Activated CD4-positive, alpha-beta T cell treated with anti-CD3 and anti-CD28 coated beads, Interleukin-2, amount 10 ng/mL, durations not matched to agents 24 days and 14 days (primary cell): ENCODE measurements at regions of chr4 and their contacts with region 1.

Region 1: DNA sequence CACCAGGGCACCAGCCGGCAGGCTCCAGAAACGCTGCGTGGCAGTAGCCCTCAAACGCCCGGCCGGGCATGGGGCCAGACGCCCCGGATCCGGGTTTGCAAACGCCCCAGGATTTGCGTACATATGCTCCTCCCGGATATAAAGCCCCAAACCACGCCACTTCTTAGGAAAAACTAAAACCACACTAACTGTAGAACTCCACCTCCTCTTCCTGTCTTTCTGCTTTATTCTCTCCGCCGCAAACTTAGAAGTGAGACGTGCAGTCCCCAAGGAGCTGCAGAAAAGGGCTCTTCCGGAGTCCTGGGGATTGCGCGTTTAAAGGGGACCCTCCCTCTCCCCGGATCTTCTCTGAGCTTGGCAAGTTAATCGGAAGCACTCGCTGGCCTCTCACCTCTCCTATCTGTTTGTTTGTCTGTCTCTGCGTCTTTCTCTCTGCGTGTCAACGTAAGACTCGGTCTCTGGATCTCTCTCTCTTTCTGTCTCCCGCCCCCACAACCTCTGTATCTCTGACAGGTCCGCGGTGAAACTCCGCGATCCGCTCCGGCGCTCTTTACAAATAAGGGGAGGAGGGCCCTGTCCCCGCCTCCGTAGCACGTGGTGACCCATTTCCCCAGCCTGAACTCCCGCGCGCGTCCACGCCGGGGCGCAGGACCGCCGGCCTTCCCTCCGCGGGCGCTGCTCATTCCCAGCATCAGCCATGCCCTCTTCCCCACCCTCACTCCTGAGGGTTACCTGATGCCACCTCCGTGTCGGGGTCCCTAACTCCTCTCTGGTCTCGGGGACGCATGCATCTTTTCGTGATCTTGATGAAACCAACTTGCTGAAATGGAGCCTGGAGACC is at the start of gene SLC39A8:
- DNase-seq: peak; percentile 96
- H3K4me3 Mint-ChIP-seq: peak within 1 kb of the TSS; percentile 88
- H3K27ac Mint-ChIP-seq: peak within 1 kb of the TSS; percentile 99
- H3K4me1 Mint-ChIP-seq: peaks cover 39% of the 10 kb centered on the region
- H3K27me3 Mint-ChIP-seq: peaks cover 7% of the 10 kb centered on the region
- total RNA-seq, gene SLC39A8: 80.4 and 81.2 TPM in 2 replicates

Region 2: GRCh38 chr4:101347557-101348366 is 997.4 kb before region 1 on chr4:
- intact Hi-C with region 1: loop called (anchors 1 kb)
- DNase-seq: peak; percentile 99
- H3K4me3 Mint-ChIP-seq: peak overlapping the region; percentile 97
- H3K27ac Mint-ChIP-seq: peak overlapping the region; percentile 91
- H3K4me1 Mint-ChIP-seq: peaks cover 27% of the 10 kb centered on the region
- H3K27me3 Mint-ChIP-seq: peaks cover 62% of the 10 kb centered on the region

Region 3: GRCh38 chr4:102324730-102325129 is 20.4 kb before region 1 on chr4:
- intact Hi-C with region 1: loop called (anchors 2 kb)
- DNase-seq: peak; percentile 29
- H3K4me3 Mint-ChIP-seq: no peak overlapping the region
- H3K27ac Mint-ChIP-seq: no peak overlapping the region
- H3K4me1 Mint-ChIP-seq: peaks cover 46% of the 10 kb centered on the region
- H3K27me3 Mint-ChIP-seq: no peaks in the 10 kb centered on the region

Region 4: GRCh38 chr4:102610007-102610406 is 264.8 kb after region 1 on chr4:
- intact Hi-C with region 1: loop called (anchors 5 kb)
- DNase-seq: no peak
- H3K4me3 Mint-ChIP-seq: no peak overlapping the region
- H3K27ac Mint-ChIP-seq: peak overlapping the region; percentile 73
- H3K4me1 Mint-ChIP-seq: peaks cover 73% of the 10 kb centered on the region
- H3K27me3 Mint-ChIP-seq: no peaks in the 10 kb centered on the region

Region 5: DNA sequence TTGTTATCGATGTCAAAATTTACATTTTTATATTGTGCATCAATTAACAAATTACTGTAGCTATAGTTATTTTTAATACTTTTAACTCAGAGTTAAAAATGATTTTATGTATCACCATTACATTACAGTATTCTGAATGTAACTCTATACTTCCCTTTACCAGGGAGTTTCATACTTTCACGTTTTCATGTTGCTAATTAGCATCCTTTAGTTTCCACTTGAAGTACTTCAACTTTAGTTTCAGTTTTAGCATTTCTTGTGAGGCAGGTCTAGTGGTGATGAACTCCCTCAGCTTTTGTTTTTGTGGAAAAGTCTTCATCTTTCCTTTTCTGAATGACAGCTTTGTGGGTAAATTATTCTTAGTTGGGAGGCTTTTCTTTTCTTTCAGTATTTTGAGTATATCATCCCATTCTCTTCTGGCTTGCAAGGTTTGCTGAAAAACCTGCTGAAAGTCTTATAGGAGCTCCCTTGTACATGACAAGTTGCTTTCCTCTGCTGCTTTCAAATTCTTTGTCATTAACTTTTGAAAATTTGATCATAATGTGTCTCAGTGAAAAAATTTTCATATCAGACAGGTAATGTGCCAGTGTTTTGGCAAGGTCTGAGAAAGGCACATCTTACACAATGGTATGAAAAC is 513.8 kb after region 1 on chr4:
- intact Hi-C with region 1: no loop called
- DNase-seq: no peak
- H3K4me3 Mint-ChIP-seq: no peak overlapping the region
- H3K27ac Mint-ChIP-seq: no peak overlapping the region
- H3K4me1 Mint-ChIP-seq: peaks cover 6% of the 10 kb centered on the region
- H3K27me3 Mint-ChIP-seq: no peaks in the 10 kb centered on the region

Region 6: GRCh38 chr4:102868781-102869568 is 523.8 kb after region 1 on chr4 and contains the start of gene CISD2:
- intact Hi-C with region 1: loop called (anchors 1 kb)
- DNase-seq: peak; percentile 98
- H3K4me3 Mint-ChIP-seq: peak within 1 kb of the TSS; percentile 93
- H3K27ac Mint-ChIP-seq: peak within 1 kb of the TSS; percentile 99
- H3K4me1 Mint-ChIP-seq: peaks cover 56% of the 10 kb centered on the region
- H3K27me3 Mint-ChIP-seq: no peaks in the 10 kb centered on the region
- total RNA-seq, gene CISD2: 43.9 and 48.5 TPM in 2 replicates

Region 7: DNA sequence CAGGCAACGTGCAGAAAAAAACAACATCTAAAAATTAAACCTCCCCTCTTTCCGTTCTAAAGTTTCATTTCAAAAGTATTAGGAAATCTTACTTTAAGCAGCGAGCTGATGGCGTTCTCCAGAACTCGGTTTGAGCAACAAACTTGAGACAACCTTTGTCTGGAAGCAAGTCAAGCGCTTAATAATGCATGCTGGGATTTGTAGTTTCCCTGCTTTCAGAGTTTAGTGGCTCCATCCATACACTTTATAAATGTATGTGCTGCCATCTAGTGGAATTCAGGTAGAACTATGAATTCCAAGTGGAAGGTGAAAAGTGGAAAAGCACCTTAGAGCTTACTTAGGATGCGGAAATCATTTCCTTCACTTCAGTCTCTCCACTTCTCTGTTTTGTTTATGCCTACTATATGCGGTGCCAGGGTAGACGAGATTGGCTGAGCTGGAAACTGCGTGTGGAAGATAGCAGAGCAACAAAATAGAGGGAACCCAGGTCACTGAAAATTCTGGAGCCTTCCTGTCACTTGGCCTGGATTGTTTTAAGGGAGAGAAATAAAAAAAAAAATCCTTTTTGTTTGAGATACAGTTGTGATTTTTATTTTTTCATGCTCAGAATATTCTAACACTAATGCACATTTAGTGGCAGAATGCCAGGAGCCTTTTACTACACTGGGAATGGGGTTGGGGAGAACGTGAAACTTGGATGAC is 754.7 kb after region 1 on chr4 and contains the start of gene BDH2:
- intact Hi-C with region 1: loop called (anchors 5 kb)
- DNase-seq: peak; percentile 87
- H3K4me3 Mint-ChIP-seq: peak within 1 kb of the TSS; percentile 84
- H3K27ac Mint-ChIP-seq: peak within 1 kb of the TSS; percentile 83
- H3K4me1 Mint-ChIP-seq: peaks cover 8% of the 10 kb centered on the region
- H3K27me3 Mint-ChIP-seq: no peaks in the 10 kb centered on the region
- total RNA-seq, gene BDH2: 11.0 and 13.2 TPM in 2 replicates